ENCODE measurements at regions of chr5 and their contacts with region 1.

Region 1: DNA sequence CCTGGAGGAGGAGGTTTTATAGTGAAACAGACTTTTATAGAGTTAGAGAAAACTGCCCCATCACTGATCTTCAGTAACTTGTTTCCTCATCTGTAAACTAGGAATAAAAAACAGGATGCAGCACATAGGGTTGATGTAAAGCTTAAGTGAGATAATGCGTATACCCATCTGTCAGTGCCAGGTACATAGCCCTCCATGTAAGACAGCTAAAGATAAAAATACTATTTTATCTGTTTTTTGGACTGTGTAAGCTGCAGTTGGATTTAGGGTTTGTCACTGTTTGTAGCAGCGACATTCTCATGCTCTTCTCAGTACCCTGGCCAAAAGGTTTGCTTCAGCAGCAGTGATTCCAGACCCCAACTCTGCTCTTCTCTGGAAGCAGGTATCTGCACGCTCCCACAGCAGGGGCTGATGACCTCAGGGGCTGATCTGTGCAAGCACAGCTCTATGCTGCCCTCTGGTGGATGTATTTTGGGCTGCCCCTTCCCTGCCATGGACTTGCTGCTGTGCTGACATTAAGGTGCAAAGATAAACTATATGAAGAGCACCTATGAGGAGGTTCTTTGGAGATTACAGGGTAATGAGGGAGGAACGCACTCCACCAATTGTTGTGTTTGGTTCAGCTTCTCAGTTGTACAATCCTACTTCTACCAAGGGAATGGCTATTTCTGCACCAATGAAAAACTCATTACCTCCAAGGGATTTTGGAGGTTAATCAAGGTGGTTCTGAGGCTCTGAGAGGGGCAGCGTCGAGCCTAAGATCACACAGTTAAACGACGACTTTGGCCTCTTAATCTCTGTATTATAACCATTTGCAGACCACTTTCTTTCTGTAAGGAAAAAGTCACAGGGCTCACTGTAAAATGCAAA is 13.1 kb downstream of the HMHB1 start:
- DNase-seq: peak; percentile 55
- H3K4me3 ChIP-seq: no peak overlapping the region
- H3K27ac ChIP-seq: no peak overlapping the region
- H3K4me1 ChIP-seq: no peaks in the 10 kb centered on the region
- H3K27me3 ChIP-seq: peaks cover 2% of the 10 kb centered on the region
- CTCF ChIP-seq: peak; percentile 94 to 97

Region 2: GRCh38 chr5:142922223-142922952 is 902.7 kb before region 1 on chr5:
- CTCF ChIA-PET with region 1: no interaction called
- dilution Hi-C with region 1: no loop called
- in situ Hi-C with region 1: no loop called
- intact Hi-C with region 1: loop called (anchors 5 kb)
- DNase-seq: no peak
- H3K4me3 ChIP-seq: no peak overlapping the region
- H3K27ac ChIP-seq: no peak overlapping the region
- H3K4me1 ChIP-seq: peaks cover 14% of the 10 kb centered on the region
- H3K27me3 ChIP-seq: no peaks in the 10 kb centered on the region
- CTCF ChIP-seq: peak; percentile 32 to 41

Region 3: DNA sequence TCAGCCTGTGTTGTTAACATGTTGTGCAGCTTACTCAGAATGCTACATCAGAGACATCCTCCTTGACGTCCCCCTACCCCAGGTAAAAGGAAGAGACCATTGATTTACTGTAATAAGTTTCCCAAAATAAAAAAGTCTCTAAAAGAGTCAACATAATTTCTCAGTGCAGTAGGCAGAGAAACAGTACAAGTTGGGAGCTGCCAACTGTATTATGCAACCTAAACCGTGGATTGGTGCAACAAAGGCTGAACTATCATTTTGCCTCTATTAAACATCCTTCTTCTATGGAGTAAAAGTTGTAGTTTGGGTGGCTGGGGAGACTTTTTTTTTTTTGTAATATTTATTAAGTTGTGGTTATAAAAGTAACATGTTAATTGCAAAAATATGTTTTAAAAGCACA is 629.6 kb before region 1 on chr5:
- CTCF ChIA-PET with region 1: no interaction called
- dilution Hi-C with region 1: no loop called
- in situ Hi-C with region 1: no loop called
- intact Hi-C with region 1: loop called (anchors 5 kb)
- DNase-seq: peak; percentile 66
- H3K4me3 ChIP-seq: no peak overlapping the region
- H3K27ac ChIP-seq: peak overlapping the region; percentile 45
- H3K4me1 ChIP-seq: peaks cover 52% of the 10 kb centered on the region
- H3K27me3 ChIP-seq: no peaks in the 10 kb centered on the region
- CTCF ChIP-seq: no peak

Region 4: DNA sequence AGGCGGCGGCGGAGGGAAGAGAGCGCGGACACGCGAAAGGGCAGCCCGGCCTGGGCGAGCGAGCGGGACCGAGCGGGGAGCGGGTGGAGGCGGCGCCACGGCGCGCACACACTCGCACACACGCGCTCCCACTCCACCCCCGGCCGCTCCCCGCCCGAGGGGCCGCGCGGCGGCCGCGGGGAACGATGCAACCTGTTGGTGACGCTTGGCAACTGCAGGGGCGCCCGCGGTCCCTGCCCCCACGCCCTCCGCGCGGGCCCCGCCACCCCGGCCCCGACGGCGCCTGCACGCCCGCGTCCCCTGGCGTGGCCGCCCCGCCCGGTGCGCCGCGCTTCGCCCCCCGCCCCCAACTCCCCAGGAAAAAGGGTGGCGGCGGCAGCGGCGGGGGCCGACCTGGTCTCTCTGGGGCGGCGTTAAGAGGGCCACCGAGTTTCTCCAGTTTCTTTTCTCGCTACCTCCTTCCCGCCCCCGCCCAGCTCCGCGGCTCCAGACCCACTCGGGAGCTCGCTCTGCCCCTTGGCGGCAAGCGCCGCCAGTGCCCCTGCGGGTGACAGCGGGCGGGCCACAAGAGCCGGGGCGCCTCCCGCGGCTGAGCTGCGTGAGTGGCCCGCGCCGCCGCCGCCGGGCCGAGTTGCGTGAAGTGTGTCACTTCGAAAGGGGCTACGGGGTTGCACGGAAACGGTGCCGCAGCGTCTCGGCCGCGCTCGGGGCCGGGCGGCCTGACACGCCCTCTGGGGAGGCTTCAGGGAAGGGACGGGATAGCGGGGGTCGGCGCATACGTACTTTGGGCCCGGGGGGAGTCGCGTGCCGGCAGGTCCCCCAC is 421.3 kb before region 1 on chr5 and contains the start of gene NR3C1:
- CTCF ChIA-PET with region 1: no interaction called
- dilution Hi-C with region 1: no loop called
- in situ Hi-C with region 1: loop called in 1 of 2 experiments (anchors 10 kb)
- intact Hi-C with region 1: loop called (anchors 1 kb)
- DNase-seq: peak; percentile 83
- H3K4me3 ChIP-seq: peak within 1 kb of the TSS; percentile 78 to 94 (median 83)
- H3K27ac ChIP-seq: peak within 1 kb of the TSS; percentile 97
- H3K4me1 ChIP-seq: peaks cover 11% of the 10 kb centered on the region
- H3K27me3 ChIP-seq: no peaks in the 10 kb centered on the region
- CTCF ChIP-seq: peak; percentile 10 to 42
- total RNA-seq, gene NR3C1: 62.8 to 64.4 TPM

Region 5: GRCh38 chr5:143693651-143694252 is 131.3 kb before region 1 on chr5:
- CTCF ChIA-PET with region 1: no interaction called
- dilution Hi-C with region 1: no loop called
- in situ Hi-C with region 1: no loop called
- intact Hi-C with region 1: loop called (anchors 10 kb)
- DNase-seq: no peak
- H3K4me3 ChIP-seq: no peak overlapping the region
- H3K27ac ChIP-seq: no peak overlapping the region
- H3K4me1 ChIP-seq: peaks cover 11% of the 10 kb centered on the region
- H3K27me3 ChIP-seq: no peaks in the 10 kb centered on the region
- CTCF ChIP-seq: no peak

Region 6: GRCh38 chr5:144142139-144142823 is 317.2 kb after region 1 on chr5:
- CTCF ChIA-PET with region 1: no interaction called
- dilution Hi-C with region 1: no loop called
- in situ Hi-C with region 1: loop called (anchors 25 kb)
- intact Hi-C with region 1: loop called (anchors 1 kb)
- DNase-seq: peak; percentile 48
- H3K4me3 ChIP-seq: no peak overlapping the region
- H3K27ac ChIP-seq: no peak overlapping the region
- H3K4me1 ChIP-seq: peaks cover 4% of the 10 kb centered on the region
- H3K27me3 ChIP-seq: no peaks in the 10 kb centered on the region
- CTCF ChIP-seq: peak; percentile 67 to 80